ENCODE measurements at regions of chr3 and their contacts with region 1.

Region 1: DNA sequence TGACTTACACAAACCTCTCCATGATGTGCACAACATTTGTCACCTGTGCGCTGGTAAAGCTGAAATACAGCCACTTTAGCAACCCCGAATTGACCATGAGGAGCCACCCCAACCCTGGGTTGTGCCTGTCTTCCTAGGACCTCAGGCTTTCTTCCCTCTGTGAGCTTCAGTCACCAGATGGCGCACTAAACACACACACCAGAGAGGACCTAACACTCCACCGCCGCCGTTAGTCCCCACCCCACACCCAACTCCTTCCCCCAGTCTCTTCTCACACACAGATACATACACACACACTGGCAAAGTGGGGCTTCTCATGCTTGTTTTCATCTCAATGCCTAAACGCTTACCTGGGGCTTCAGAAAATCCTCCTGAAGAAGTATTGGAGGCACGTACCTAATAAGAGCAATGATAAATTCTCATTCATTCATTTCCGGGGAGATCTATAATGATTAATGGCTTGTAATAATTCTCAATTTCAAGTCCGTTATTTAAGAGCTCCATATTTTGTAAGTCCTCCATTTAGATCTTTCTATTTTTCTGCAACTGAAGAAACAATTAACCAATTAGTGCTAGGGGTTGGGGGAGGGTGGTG is 2.1 kb upstream of the CCDC80 start:
- DNase-seq: peak; percentile 90 to 91
- ATAC-seq: peak; percentile 85
- H3K4me3 ChIP-seq: no peak overlapping the region
- H3K27ac ChIP-seq: no peak overlapping the region
- H3K4me1 ChIP-seq: no peaks in the 10 kb centered on the region
- H3K27me3 ChIP-seq: no peaks in the 10 kb centered on the region

Region 2: GRCh38 chr3:112561731-112562688 is 81.0 kb before region 1 on chr3 and contains the starts of genes ATG3 and SLC35A5:
- intact Hi-C with region 1: loop called in 1 of 2 experiments (anchors 5 kb)
- DNase-seq: peak; percentile 99 to 100
- ATAC-seq: peak; percentile 99
- H3K4me3 ChIP-seq: peak within 1 kb of the TSS; percentile 85 to 87
- H3K27ac ChIP-seq: peak within 1 kb of the TSS; percentile 73 to 90
- H3K4me1 ChIP-seq: peaks cover 0 to 1% of the 10 kb centered on the region in 2 donors
- H3K27me3 ChIP-seq: no peaks in the 10 kb centered on the region
- total RNA-seq, gene ATG3: 47.7 to 53.0 TPM
- total RNA-seq, gene SLC35A5: 25.2 to 30.5 TPM

Region 3: GRCh38 chr3:112582244-112582874 is 60.6 kb before region 1 on chr3:
- intact Hi-C with region 1: loop called in 1 of 2 experiments (anchors 5 kb)
- DNase-seq: no peak
- ATAC-seq: no peak
- H3K4me3 ChIP-seq: no peak overlapping the region
- H3K27ac ChIP-seq: no peak overlapping the region
- H3K4me1 ChIP-seq: no peaks in the 10 kb centered on the region
- H3K27me3 ChIP-seq: no peaks in the 10 kb centered on the region

Region 4: DNA sequence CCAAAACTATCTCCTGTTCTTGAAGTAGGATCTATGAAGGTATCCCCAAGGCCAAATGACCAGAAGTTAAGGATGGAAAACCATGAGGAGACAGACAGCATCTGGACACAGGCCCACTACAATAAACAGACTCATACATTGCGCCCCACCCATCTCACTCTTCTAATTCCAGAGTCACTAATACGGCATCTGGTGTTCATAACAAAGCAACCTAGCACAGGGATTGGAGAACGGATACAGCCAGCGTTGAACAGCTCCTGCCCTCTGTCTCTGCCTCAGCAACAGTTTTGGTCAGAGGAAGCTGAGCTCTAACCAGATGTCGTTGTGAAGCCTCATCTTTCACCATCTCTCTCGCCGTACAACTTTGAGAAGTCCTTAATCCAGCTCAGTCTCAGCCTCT is 42.4 kb after region 1 on chr3:
- intact Hi-C with region 1: loop called in 1 of 2 experiments (anchors 5 kb)
- DNase-seq: no peak
- ATAC-seq: no peak
- H3K4me3 ChIP-seq: no peak overlapping the region
- H3K27ac ChIP-seq: no peak overlapping the region
- H3K4me1 ChIP-seq: no peaks in the 10 kb centered on the region
- H3K27me3 ChIP-seq: no peaks in the 10 kb centered on the region

Region 5: GRCh38 chr3:112699436-112699978 is 56.5 kb after region 1 on chr3:
- intact Hi-C with region 1: loop called in 1 of 2 experiments (anchors 5 kb)
- DNase-seq: no peak
- ATAC-seq: no peak
- H3K4me3 ChIP-seq: no peak overlapping the region
- H3K27ac ChIP-seq: no peak overlapping the region
- H3K4me1 ChIP-seq: no peaks in the 10 kb centered on the region
- H3K27me3 ChIP-seq: no peaks in the 10 kb centered on the region

Region 6: GRCh38 chr3:112814266-112814665 is 171.3 kb after region 1 on chr3:
- intact Hi-C with region 1: loop called (anchors 2 kb)
- DNase-seq: no peak
- ATAC-seq: peak; percentile 63
- H3K4me3 ChIP-seq: no peak overlapping the region
- H3K27ac ChIP-seq: no peak overlapping the region
- H3K4me1 ChIP-seq: peaks cover 3 to 5% of the 10 kb centered on the region in 2 donors
- H3K27me3 ChIP-seq: no peaks in the 10 kb centered on the region

Region 7: GRCh38 chr3:112931736-112932521 is 288.9 kb after region 1 on chr3:
- intact Hi-C with region 1: no loop called
- DNase-seq: peak; percentile 51
- ATAC-seq: peak; percentile 44
- H3K4me3 ChIP-seq: no peak overlapping the region
- H3K27ac ChIP-seq: no peak overlapping the region
- H3K4me1 ChIP-seq: no peaks in the 10 kb centered on the region
- H3K27me3 ChIP-seq: no peaks in the 10 kb centered on the region

Region 8: GRCh38 chr3:112979240-112979832 is 336.3 kb after region 1 on chr3:
- intact Hi-C with region 1: loop called (anchors 2 kb)
- DNase-seq: no peak
- ATAC-seq: no peak
- H3K4me3 ChIP-seq: no peak overlapping the region
- H3K27ac ChIP-seq: no peak overlapping the region
- H3K4me1 ChIP-seq: no peaks in the 10 kb centered on the region
- H3K27me3 ChIP-seq: no peaks in the 10 kb centered on the region

Measured in aorta (tissue), 5 donors.